ENCODE measurements at regions of chr15 and their contacts with region 1.

Region 1: GRCh38 chr15:56245871-56246814 is 2.5 kb upstream of the RFX7 start:
- DNase-seq: peak; percentile 87
- H3K27ac ChIP-seq: peak overlapping the region; percentile 68
- CTCF ChIP-seq: peak; percentile 100

Region 2: GRCh38 chr15:56281145-56281544 is 35.0 kb after region 1 on chr15:
- CTCF ChIA-PET with region 1: no interaction called
- POLR2A ChIA-PET with region 1: no interaction called
- DNase-seq: no peak
- H3K27ac ChIP-seq: no peak overlapping the region
- CTCF ChIP-seq: no peak

Region 3: GRCh38 chr15:56428821-56429458 is 182.8 kb after region 1 on chr15:
- CTCF ChIA-PET with region 1: interaction called, 13 read pairs
- POLR2A ChIA-PET with region 1: interaction called, 3 read pairs
- DNase-seq: peak; percentile 42
- H3K27ac ChIP-seq: no peak overlapping the region
- CTCF ChIP-seq: peak; percentile 79